Activated B cell treated with CpG ODN at 0.5 μM for 24 hours (primary cell): ENCODE measurements at regions of chr4 and their contacts with region 1.

Region 1: GRCh38 chr4:8241895-8242696 is 27.5 kb upstream of the HTRA3 start:
- DNase-seq: peak; percentile 85
- ATAC-seq: peak; percentile 74
- H3K4me3 Mint-ChIP-seq: no peak overlapping the region
- H3K27ac Mint-ChIP-seq: no peak overlapping the region
- H3K4me1 Mint-ChIP-seq: peaks cover 21% of the 10 kb centered on the region
- H3K27me3 Mint-ChIP-seq: no peaks in the 10 kb centered on the region
- CTCF ChIP-seq: peak; percentile 83

Region 2: DNA sequence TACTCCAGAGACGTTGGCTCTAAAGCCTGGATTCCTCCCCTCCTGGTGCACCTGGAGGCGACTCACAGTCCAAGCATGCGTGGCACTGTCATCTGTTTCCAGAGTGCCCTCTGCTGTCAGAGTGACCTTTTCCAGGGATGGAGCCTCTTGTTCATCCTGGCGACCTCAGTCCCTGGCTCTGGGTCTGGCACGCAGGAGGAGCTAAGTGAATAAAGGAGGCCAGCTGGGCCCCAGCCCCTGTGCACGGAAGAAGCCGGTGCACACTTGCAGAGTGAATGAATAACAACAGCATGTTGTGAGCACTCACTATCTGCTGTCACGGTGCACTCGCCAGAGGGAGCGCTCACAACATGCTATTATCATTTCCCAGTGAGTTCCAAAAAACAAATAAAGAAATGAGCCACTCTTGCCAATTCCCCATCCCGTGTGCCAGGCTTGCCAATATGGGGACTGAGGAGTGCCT is 779.6 kb before region 1 on chr4:
- CTCF ChIA-PET with region 1: no interaction called
- POLR2A ChIA-PET with region 1: no interaction called
- intact Hi-C with region 1: no loop called
- DNase-seq: no peak
- ATAC-seq: no peak
- H3K4me3 Mint-ChIP-seq: no peak overlapping the region
- H3K27ac Mint-ChIP-seq: no peak overlapping the region
- H3K4me1 Mint-ChIP-seq: no peaks in the 10 kb centered on the region
- H3K27me3 Mint-ChIP-seq: no peaks in the 10 kb centered on the region
- CTCF ChIP-seq: no peak

Region 3: DNA sequence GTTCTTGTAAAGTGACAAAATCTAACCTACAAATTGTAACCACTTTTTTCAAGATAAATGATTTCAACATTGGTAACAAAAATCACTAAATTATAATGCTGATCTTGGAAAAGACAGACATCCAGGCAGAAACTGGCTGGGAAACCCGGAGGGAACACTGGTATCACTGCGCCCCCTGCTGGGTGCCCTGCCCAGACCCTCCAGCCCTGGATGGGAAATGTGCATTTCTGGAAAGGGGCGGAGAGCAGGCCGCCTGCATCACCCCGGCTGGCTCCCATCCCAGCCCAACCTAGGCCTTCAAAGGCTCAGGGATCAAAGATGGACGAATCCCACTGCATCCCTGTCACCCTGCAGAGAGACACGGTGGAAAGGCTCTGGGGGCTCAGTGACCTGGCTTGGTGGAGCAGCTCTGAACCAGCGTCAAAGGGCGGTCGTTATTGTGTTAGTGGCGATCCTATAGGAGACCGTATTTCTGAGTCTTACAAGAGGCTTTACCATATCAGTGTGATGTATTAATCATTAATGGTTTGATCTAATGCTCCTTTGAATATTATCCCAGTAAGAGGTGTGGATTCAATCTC is 161.2 kb after region 1 on chr4:
- CTCF ChIA-PET with region 1: interaction called, 17 read pairs
- POLR2A ChIA-PET with region 1: no interaction called
- intact Hi-C with region 1: loop called (anchors 1 kb)
- DNase-seq: peak; percentile 50
- ATAC-seq: peak; percentile 50
- H3K4me3 Mint-ChIP-seq: no peak overlapping the region
- H3K27ac Mint-ChIP-seq: no peak overlapping the region
- H3K4me1 Mint-ChIP-seq: peaks cover 5% of the 10 kb centered on the region
- H3K27me3 Mint-ChIP-seq: no peaks in the 10 kb centered on the region
- CTCF ChIP-seq: peak; percentile 39